Right lobe of liver (tissue), 6 donors: ENCODE measurements at regions of chr4 and their contacts with region 1.

Region 1: GRCh38 chr4:22427675-22428074 is 88.2 kb downstream of the ADGRA3 start:
- DNase-seq: no peak
- ATAC-seq: no peak
- H3K4me3 ChIP-seq: no peak overlapping the region
- H3K27ac ChIP-seq: no peak overlapping the region
- H3K4me1 ChIP-seq: no peaks in the 10 kb centered on the region
- H3K27me3 ChIP-seq: no peaks in the 10 kb centered on the region
- CTCF ChIP-seq: no peak
- POLR2A ChIP-seq: no peak

Region 2: DNA sequence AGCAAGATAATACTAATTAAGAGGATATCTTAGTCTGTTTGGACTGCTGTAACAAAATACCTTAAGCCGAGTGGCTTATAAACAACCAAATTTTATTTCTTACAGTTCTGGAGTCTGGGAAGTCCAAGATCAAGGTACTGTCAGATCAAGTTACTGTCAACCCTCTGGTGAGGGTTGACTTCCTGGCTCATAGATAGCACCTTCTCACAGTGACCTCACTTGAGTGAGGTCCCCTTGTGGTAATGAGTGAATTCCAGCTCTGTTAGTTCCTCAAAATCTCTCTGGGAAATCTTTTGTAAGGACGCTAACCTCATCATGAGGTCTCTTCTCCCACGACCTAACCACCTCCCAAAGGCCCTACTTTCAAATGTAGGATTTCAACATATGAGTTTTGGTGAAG is 125.1 kb after region 1 on chr4:
- intact Hi-C with region 1: no loop called
- DNase-seq: no peak
- ATAC-seq: no peak
- H3K4me3 ChIP-seq: no peak overlapping the region
- H3K27ac ChIP-seq: no peak overlapping the region
- H3K4me1 ChIP-seq: no peaks in the 10 kb centered on the region
- H3K27me3 ChIP-seq: no peaks in the 10 kb centered on the region
- CTCF ChIP-seq: no peak
- POLR2A ChIP-seq: no peak

Region 3: GRCh38 chr4:22614114-22614513 is 186.4 kb after region 1 on chr4:
- intact Hi-C with region 1: loop called in 1 of 2 experiments (anchors 10 kb)
- DNase-seq: peak; percentile 61 to 81 (median 74)
- ATAC-seq: peak; percentile 92 to 96 (median 94)
- H3K4me3 ChIP-seq: no peak overlapping the region
- H3K27ac ChIP-seq: peak overlapping the region in 1 of 3 donors; percentile 60
- H3K4me1 ChIP-seq: peaks cover 0 to 15% (median 0%) of the 10 kb centered on the region in 4 donors
- H3K27me3 ChIP-seq: no peaks in the 10 kb centered on the region
- CTCF ChIP-seq: no peak
- POLR2A ChIP-seq: no peak